ENCODE measurements at regions of chr17 and their contacts with region 1.

Region 1: DNA sequence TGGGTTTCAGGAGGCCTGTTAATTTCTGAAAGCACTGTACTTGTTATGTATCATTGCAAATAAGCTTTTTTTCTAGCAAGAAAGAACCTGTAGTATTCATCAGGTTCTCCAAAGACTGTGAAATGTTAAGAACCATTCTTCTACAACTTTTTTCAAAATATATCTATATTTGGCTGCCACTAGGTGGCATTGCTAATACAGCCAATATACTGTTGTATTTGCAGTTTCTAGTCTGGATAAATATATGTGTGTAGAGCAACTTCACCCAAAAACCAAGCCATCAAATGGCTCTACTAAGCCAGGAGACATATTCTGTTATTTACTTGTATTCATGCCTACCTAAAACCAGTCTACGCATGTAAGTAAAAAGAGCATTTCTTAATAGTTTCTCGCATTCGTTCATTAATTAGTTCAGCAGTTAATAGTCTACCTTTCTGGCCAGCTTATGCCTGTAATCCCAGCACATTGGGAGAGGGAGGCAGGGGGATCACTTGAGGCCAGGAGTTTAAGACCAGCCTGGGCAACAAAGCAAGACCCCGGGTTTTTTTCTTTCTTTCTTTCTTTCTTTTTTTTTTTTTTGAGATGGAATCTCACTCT is 39.5 kb downstream of the VMP1 start:
- DNase-seq: peak; percentile 50
- CTCF ChIP-seq: peak; percentile 67

Region 2: DNA sequence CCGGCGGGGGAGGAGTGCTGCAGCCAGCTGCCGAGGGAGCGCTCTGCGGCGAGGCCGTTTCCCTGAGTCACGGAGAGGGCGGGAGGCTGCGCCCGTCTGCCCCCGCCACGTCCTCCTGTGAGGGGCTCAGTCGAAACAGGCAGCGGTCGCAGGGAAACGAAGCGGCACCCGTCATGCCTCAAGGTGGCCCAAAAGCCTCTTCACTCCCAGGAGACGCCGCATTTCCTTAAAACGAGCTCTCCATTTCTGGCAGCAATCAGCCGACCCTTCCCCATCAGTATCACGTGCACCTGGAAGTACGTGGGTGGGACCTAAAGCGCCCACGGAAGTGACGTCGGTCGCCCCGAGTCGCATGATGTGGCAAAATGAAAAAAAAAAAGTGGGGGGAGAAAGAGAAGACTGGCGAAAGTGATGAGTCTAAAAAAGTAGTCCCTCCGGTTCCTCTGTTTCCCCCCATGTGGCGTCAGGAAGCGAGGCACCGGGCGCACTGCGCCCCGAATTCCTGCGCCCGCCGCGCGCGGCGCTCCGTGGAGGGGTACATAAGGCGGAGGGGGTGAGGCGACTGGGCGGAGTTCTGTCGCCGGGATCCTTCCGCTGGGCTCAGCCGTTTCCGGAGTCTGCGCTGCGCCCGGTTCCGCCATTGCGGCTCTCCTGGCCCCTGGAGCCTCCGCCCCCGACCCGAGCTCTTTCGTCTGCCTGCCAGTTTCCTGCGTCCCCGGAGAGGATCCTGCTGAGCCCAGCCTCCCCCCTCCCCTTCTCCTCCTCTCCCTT is 127.5 kb before region 1 on chr17 and contains the start of gene CLTC:
- CTCF ChIA-PET with region 1: no interaction called
- POLR2A ChIA-PET with region 1: no interaction called
- DNase-seq: peak; percentile 86
- CTCF ChIP-seq: no peak

Region 3: GRCh38 chr17:59734226-59734625 is 12.7 kb before region 1 on chr17:
- CTCF ChIA-PET with region 1: interaction called, 10 read pairs
- POLR2A ChIA-PET with region 1: no interaction called
- DNase-seq: no peak
- CTCF ChIP-seq: no peak

Region 4: GRCh38 chr17:59846394-59847165 is 99.6 kb after region 1 on chr17:
- CTCF ChIA-PET with region 1: interaction called, 93 read pairs
- POLR2A ChIA-PET with region 1: no interaction called
- DNase-seq: peak; percentile 53
- CTCF ChIP-seq: no peak

Measured in GM10248 (cell line).